ENCODE measurements at regions of chr12 and their contacts with region 1.

Region 1: GRCh38 chr12:22709292-22709691 is 84.3 kb downstream of the ETNK1 start:
- DNase-seq: no peak
- H3K4me3 ChIP-seq: peak overlapping the region in 1 of 2 donors; percentile 36
- H3K27ac ChIP-seq: no peak overlapping the region
- H3K4me1 ChIP-seq: no peaks in the 10 kb centered on the region
- H3K27me3 ChIP-seq: no peaks in the 10 kb centered on the region
- CTCF ChIP-seq: peak; percentile 53 to 79 (median 70)

Region 2: GRCh38 chr12:22505826-22506225 is 203.5 kb before region 1 on chr12:
- intact Hi-C with region 1: no loop called
- DNase-seq: no peak
- H3K4me3 ChIP-seq: no peak overlapping the region
- H3K27ac ChIP-seq: no peak overlapping the region
- H3K4me1 ChIP-seq: no peaks in the 10 kb centered on the region
- H3K27me3 ChIP-seq: no peaks in the 10 kb centered on the region
- CTCF ChIP-seq: no peak

Region 3: GRCh38 chr12:22856178-22856577 is 146.9 kb after region 1 on chr12:
- intact Hi-C with region 1: loop called (anchors 5 kb)
- DNase-seq: no peak
- H3K4me3 ChIP-seq: no peak overlapping the region
- H3K27ac ChIP-seq: no peak overlapping the region
- H3K4me1 ChIP-seq: no peaks in the 10 kb centered on the region
- H3K27me3 ChIP-seq: no peaks in the 10 kb centered on the region
- CTCF ChIP-seq: peak; percentile 32 to 76 (median 60)

Region 4: GRCh38 chr12:23055004-23055403 is 345.7 kb after region 1 on chr12:
- intact Hi-C with region 1: loop called (anchors 5 kb)
- DNase-seq: no peak
- H3K4me3 ChIP-seq: no peak overlapping the region
- H3K27ac ChIP-seq: no peak overlapping the region
- H3K4me1 ChIP-seq: no peaks in the 10 kb centered on the region
- H3K27me3 ChIP-seq: no peaks in the 10 kb centered on the region
- CTCF ChIP-seq: peak in 1 of 3 experiments; percentile 39